Right cardiac atrium (tissue), 5 donors: ENCODE measurements at regions of chr1 and their contacts with region 1.

Region 1: GRCh38 chr1:109643385-109644230 is 12.3 kb upstream of the GSTM4 start:
- DNase-seq: peak; percentile 81 to 93 (median 93)
- ATAC-seq: peak; percentile 82 to 88
- H3K4me3 ChIP-seq: no peak overlapping the region
- H3K27ac ChIP-seq: no peak overlapping the region
- H3K4me1 ChIP-seq: no peaks in the 10 kb centered on the region
- H3K27me3 ChIP-seq: no peaks in the 10 kb centered on the region

Region 2: GRCh38 chr1:109718491-109718890 is 74.9 kb after region 1 on chr1:
- intact Hi-C with region 1: no loop called
- DNase-seq: no peak
- ATAC-seq: no peak
- H3K4me3 ChIP-seq: no peak overlapping the region
- H3K27ac ChIP-seq: no peak overlapping the region
- H3K4me1 ChIP-seq: no peaks in the 10 kb centered on the region
- H3K27me3 ChIP-seq: no peaks in the 10 kb centered on the region

Region 3: GRCh38 chr1:109773146-109773899 is 129.7 kb after region 1 on chr1:
- intact Hi-C with region 1: loop called (anchors 2 to 5 kb)
- DNase-seq: peak; percentile 85 to 92 (median 92)
- ATAC-seq: peak; percentile 86 to 87
- H3K4me3 ChIP-seq: no peak overlapping the region
- H3K27ac ChIP-seq: no peak overlapping the region
- H3K4me1 ChIP-seq: no peaks in the 10 kb centered on the region
- H3K27me3 ChIP-seq: no peaks in the 10 kb centered on the region